Caco-2 (cell line): ENCODE measurements at regions of chr2 and their contacts with region 1.

Region 1: DNA sequence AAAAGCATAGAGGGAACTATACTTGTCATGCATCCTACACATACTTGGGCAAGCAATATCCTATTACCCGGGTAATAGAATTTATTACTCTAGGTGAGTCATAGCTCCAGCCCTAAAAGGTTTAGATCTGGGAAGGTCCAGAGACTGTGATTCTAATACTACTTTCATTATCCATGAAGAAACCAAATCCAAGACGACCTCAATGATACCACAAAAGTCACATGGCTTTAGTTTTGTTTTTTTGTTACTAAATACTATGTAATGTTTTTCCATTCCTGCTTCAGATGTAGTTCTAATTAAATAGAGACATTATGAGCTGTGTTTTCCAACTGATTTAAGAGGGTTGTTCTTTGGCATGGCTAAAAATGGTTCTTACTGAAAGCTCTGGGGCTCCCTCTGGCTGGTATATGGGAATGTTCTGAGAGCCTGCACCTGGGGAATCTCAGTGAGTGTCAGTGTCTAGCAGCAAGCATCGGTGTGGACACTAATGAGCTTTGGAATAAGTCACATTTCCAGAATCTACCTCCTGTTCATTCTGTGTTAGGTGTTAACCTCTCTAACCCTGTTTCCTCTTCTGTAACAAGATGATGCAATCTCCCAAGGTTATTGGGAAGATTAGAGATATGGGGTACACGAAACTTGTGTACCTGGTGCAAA is 20.5 kb upstream of the IL1RL2 start:
- DNase-seq: peak in 1 of 2 experiments; percentile 58
- H3K4me3 ChIP-seq: no peak overlapping the region
- H3K4me3 Mint-ChIP-seq: no peak overlapping the region
- H3K27ac Mint-ChIP-seq: no peak overlapping the region
- H3K4me1 ChIP-seq: peaks cover 11% of the 10 kb centered on the region
- H3K4me1 Mint-ChIP-seq: peaks cover 2% of the 10 kb centered on the region
- H3K27me3 ChIP-seq: no peaks in the 10 kb centered on the region
- H3K27me3 Mint-ChIP-seq: no peaks in the 10 kb centered on the region
- CTCF ChIP-seq: peak; percentile 60 to 80

Region 2: DNA sequence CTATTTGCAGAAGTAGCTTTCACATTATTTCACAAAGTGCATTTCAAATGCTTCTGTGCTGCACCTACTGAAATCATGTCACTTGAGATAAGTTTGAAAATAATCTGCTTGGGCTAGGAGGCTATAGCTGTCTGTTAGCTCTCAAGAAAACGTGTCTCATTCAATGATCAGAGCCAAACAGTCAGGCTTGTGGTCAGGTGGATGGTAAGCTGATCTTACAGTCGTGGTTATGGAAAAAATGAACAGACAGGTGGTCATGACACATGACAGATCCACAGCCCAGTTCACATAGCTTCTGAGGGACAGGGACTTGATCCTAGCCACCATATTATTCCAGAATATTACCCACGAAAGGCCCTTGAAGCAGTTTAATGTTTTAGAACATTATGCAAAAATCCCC is 664.9 kb before region 1 on chr2:
- CTCF ChIA-PET with region 1: no interaction called
- POLR2A ChIA-PET with region 1: no interaction called
- intact Hi-C with region 1: no loop called
- DNase-seq: no peak
- H3K4me3 ChIP-seq: no peak overlapping the region
- H3K4me3 Mint-ChIP-seq: no peak overlapping the region
- H3K27ac Mint-ChIP-seq: no peak overlapping the region
- H3K4me1 ChIP-seq: no peaks in the 10 kb centered on the region
- H3K4me1 Mint-ChIP-seq: no peaks in the 10 kb centered on the region
- H3K27me3 ChIP-seq: no peaks in the 10 kb centered on the region
- H3K27me3 Mint-ChIP-seq: no peaks in the 10 kb centered on the region
- CTCF ChIP-seq: no peak

Region 3: GRCh38 chr2:101883863-101884262 is 282.5 kb before region 1 on chr2:
- CTCF ChIA-PET with region 1: interaction called, 4 read pairs
- POLR2A ChIA-PET with region 1: no interaction called
- intact Hi-C with region 1: loop called (anchors 1 kb)
- DNase-seq: peak in 1 of 2 experiments; percentile 62
- H3K4me3 ChIP-seq: no peak overlapping the region
- H3K4me3 Mint-ChIP-seq: no peak overlapping the region
- H3K27ac Mint-ChIP-seq: no peak overlapping the region
- H3K4me1 ChIP-seq: no peaks in the 10 kb centered on the region
- H3K4me1 Mint-ChIP-seq: peaks cover 7% of the 10 kb centered on the region
- H3K27me3 ChIP-seq: no peaks in the 10 kb centered on the region
- H3K27me3 Mint-ChIP-seq: no peaks in the 10 kb centered on the region
- CTCF ChIP-seq: peak; percentile 63 to 73

Region 4: GRCh38 chr2:102005989-102006885 is 160.1 kb before region 1 on chr2:
- CTCF ChIA-PET with region 1: interaction called, 15 read pairs
- POLR2A ChIA-PET with region 1: no interaction called
- intact Hi-C with region 1: no loop called
- DNase-seq: peak; percentile 65 to 70
- H3K4me3 ChIP-seq: no peak overlapping the region
- H3K4me3 Mint-ChIP-seq: no peak overlapping the region
- H3K27ac Mint-ChIP-seq: no peak overlapping the region
- H3K4me1 ChIP-seq: peaks cover 17% of the 10 kb centered on the region
- H3K4me1 Mint-ChIP-seq: no peaks in the 10 kb centered on the region
- H3K27me3 ChIP-seq: no peaks in the 10 kb centered on the region
- H3K27me3 Mint-ChIP-seq: no peaks in the 10 kb centered on the region
- CTCF ChIP-seq: peak; percentile 71 to 73

Region 5: GRCh38 chr2:102020596-102021181 is 145.6 kb before region 1 on chr2:
- CTCF ChIA-PET with region 1: interaction called, 41 read pairs
- POLR2A ChIA-PET with region 1: no interaction called
- intact Hi-C with region 1: loop called (anchors 1 kb)
- DNase-seq: peak; percentile 88 to 90
- H3K4me3 ChIP-seq: no peak overlapping the region
- H3K4me3 Mint-ChIP-seq: no peak overlapping the region
- H3K27ac Mint-ChIP-seq: peak overlapping the region; percentile 35
- H3K4me1 ChIP-seq: peaks cover 5% of the 10 kb centered on the region
- H3K4me1 Mint-ChIP-seq: peaks cover 5% of the 10 kb centered on the region
- H3K27me3 ChIP-seq: no peaks in the 10 kb centered on the region
- H3K27me3 Mint-ChIP-seq: no peaks in the 10 kb centered on the region
- CTCF ChIP-seq: peak; percentile 97 to 98

Region 6: DNA sequence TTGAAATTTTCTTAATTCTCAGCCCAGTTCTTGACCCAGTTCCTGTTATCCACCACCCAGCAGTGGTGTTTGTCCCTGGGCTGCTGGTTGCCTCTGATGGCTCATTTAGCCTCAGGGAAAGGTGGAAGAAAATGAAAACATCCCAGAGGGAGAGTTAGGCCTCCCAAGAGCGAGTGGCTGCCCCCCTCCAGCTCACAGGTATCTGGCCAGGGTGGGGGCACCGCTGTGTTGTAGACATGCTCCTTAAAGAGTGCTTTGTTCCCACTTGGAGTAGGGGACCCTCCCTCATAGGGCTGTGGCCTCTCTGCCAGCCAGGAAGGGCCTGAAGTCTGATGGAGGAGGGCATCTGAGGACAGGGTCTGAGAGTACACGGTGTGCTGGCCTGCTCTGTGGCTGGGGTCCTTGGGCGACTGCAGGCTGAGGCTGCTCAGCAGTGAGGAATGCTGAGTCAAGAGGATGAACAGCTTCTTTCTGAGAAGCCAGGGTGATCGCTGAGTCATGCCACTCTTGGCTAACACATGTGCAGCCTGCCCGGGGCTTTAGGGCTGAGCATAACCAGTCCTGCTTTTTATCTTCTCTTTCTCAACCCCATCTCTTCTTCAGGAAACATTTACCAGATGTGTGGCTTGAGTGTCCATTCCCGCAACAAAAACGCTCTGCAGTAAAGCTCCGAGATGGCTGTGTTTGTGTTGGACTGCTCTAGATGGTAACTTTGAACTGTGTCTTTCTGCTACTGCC is 102.2 kb before region 1 on chr2:
- CTCF ChIA-PET with region 1: interaction called, 10 read pairs
- POLR2A ChIA-PET with region 1: no interaction called
- intact Hi-C with region 1: no loop called
- DNase-seq: peak; percentile 73 to 86
- H3K4me3 ChIP-seq: no peak overlapping the region
- H3K4me3 Mint-ChIP-seq: no peak overlapping the region
- H3K27ac Mint-ChIP-seq: peak overlapping the region; percentile 69
- H3K4me1 ChIP-seq: peaks cover 33% of the 10 kb centered on the region
- H3K4me1 Mint-ChIP-seq: peaks cover 36% of the 10 kb centered on the region
- H3K27me3 ChIP-seq: no peaks in the 10 kb centered on the region
- H3K27me3 Mint-ChIP-seq: no peaks in the 10 kb centered on the region
- CTCF ChIP-seq: no peak

Region 7: GRCh38 chr2:102122110-102122509 is 44.2 kb before region 1 on chr2:
- CTCF ChIA-PET with region 1: no interaction called
- POLR2A ChIA-PET with region 1: no interaction called
- intact Hi-C with region 1: no loop called
- DNase-seq: no peak
- H3K4me3 ChIP-seq: no peak overlapping the region
- H3K4me3 Mint-ChIP-seq: no peak overlapping the region
- H3K27ac Mint-ChIP-seq: no peak overlapping the region
- H3K4me1 ChIP-seq: 0 out of 2 replicates have a peak, but pooled peaks cover 5% of the 10 kb centered on the region
- H3K4me1 Mint-ChIP-seq: no peaks in the 10 kb centered on the region
- H3K27me3 ChIP-seq: no peaks in the 10 kb centered on the region
- H3K27me3 Mint-ChIP-seq: no peaks in the 10 kb centered on the region
- CTCF ChIP-seq: no peak

Region 8: GRCh38 chr2:102141970-102142828 is 24.1 kb before region 1 on chr2 and contains the start of gene IL1R1:
- CTCF ChIA-PET with region 1: interaction called, 15 read pairs
- POLR2A ChIA-PET with region 1: no interaction called
- intact Hi-C with region 1: no loop called
- DNase-seq: peak; percentile 72 to 89
- H3K4me3 ChIP-seq: peak within 1 kb of the TSS; percentile 48
- H3K4me3 Mint-ChIP-seq: peak within 1 kb of the TSS; percentile 90
- H3K27ac Mint-ChIP-seq: peak within 1 kb of the TSS; percentile 95
- H3K4me1 ChIP-seq: no peaks in the 10 kb centered on the region
- H3K4me1 Mint-ChIP-seq: peaks cover 6% of the 10 kb centered on the region
- H3K27me3 ChIP-seq: no peaks in the 10 kb centered on the region
- H3K27me3 Mint-ChIP-seq: no peaks in the 10 kb centered on the region
- CTCF ChIP-seq: peak in 1 of 2 experiments; percentile 24
- total RNA-seq, gene IL1R1: 23.5 and 25.0 TPM in 2 replicates